Calu3 (cell line): ENCODE measurements at regions of chr1 and their contacts with region 1.

Region 1: GRCh38 chr1:61453111-61453961 is 271.6 kb downstream of the TM2D1 start:
- DNase-seq: peak; percentile 85
- H3K4me3 Mint-ChIP-seq: peak overlapping the region; percentile 24
- H3K27ac Mint-ChIP-seq: peak overlapping the region; percentile 94
- H3K4me1 Mint-ChIP-seq: peaks cover 44% of the 10 kb centered on the region
- H3K27me3 Mint-ChIP-seq: no peaks in the 10 kb centered on the region
- CTCF ChIP-seq: peak; percentile 83

Region 2: GRCh38 chr1:60969971-60970509 is 483.3 kb before region 1 on chr1:
- CTCF ChIA-PET with region 1: no interaction called
- intact Hi-C with region 1: loop called (anchors 2 kb)
- DNase-seq: no peak
- H3K4me3 Mint-ChIP-seq: no peak overlapping the region
- H3K27ac Mint-ChIP-seq: no peak overlapping the region
- H3K4me1 Mint-ChIP-seq: peaks cover 28% of the 10 kb centered on the region
- H3K27me3 Mint-ChIP-seq: peaks cover 11% of the 10 kb centered on the region
- CTCF ChIP-seq: no peak

Region 3: DNA sequence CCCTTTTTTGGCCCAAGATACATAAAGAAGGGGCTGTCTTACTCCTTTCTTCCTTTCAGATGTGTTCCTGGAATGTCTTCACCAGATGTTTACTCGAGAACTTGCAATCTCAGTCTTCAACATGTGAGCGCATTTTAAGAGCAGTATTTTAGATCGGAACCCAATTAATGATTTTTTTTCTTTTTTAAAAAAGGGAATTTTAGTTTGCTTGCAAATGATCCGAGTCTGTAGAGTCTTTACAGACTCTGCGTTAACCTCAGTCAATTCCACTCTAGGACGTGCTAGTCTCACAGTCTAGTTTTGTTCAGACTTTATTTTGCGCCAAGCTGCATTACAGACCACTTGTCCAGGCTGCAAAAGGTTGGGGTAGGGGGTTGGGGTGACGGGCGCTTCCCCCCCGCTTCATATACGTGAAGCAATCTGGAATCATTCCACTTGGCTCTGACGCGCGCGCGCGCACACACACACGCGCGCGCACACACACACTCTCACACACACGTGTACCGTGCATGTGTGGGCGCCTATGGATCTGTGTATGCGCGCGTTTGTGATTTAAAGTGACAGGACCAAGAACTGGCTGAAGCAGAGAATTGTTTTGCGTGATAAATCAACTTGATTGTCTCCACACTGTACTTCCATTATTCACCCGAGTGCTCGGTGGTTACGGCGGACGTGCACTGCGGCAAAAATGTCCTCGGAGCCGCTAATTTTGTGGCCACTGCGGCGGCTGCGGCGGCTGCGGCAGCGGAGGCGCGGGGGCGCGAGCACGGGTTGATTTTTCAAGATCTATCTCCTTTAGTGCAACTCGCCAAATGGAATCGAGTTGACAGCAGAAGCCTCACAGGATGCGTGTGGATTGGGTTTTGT is 396.5 kb before region 1 on chr1:
- CTCF ChIA-PET with region 1: no interaction called
- intact Hi-C with region 1: loop called (anchors 5 kb)
- DNase-seq: no peak
- H3K4me3 Mint-ChIP-seq: peak overlapping the region; percentile 95
- H3K27ac Mint-ChIP-seq: peak overlapping the region; percentile 86
- H3K4me1 Mint-ChIP-seq: peaks cover 29% of the 10 kb centered on the region
- H3K27me3 Mint-ChIP-seq: peaks cover 23% of the 10 kb centered on the region
- CTCF ChIP-seq: no peak

Region 4: GRCh38 chr1:61170328-61171238 is 282.8 kb before region 1 on chr1:
- CTCF ChIA-PET with region 1: no interaction called
- intact Hi-C with region 1: no loop called
- DNase-seq: peak; percentile 16
- H3K4me3 Mint-ChIP-seq: no peak overlapping the region
- H3K27ac Mint-ChIP-seq: no peak overlapping the region
- H3K4me1 Mint-ChIP-seq: peaks cover 28% of the 10 kb centered on the region
- H3K27me3 Mint-ChIP-seq: no peaks in the 10 kb centered on the region
- CTCF ChIP-seq: no peak

Region 5: GRCh38 chr1:61226784-61227567 is 226.4 kb before region 1 on chr1:
- CTCF ChIA-PET with region 1: no interaction called
- intact Hi-C with region 1: loop called (anchors 10 kb)
- DNase-seq: no peak
- H3K4me3 Mint-ChIP-seq: no peak overlapping the region
- H3K27ac Mint-ChIP-seq: no peak overlapping the region
- H3K4me1 Mint-ChIP-seq: peaks cover 26% of the 10 kb centered on the region
- H3K27me3 Mint-ChIP-seq: no peaks in the 10 kb centered on the region
- CTCF ChIP-seq: no peak

Region 6: DNA sequence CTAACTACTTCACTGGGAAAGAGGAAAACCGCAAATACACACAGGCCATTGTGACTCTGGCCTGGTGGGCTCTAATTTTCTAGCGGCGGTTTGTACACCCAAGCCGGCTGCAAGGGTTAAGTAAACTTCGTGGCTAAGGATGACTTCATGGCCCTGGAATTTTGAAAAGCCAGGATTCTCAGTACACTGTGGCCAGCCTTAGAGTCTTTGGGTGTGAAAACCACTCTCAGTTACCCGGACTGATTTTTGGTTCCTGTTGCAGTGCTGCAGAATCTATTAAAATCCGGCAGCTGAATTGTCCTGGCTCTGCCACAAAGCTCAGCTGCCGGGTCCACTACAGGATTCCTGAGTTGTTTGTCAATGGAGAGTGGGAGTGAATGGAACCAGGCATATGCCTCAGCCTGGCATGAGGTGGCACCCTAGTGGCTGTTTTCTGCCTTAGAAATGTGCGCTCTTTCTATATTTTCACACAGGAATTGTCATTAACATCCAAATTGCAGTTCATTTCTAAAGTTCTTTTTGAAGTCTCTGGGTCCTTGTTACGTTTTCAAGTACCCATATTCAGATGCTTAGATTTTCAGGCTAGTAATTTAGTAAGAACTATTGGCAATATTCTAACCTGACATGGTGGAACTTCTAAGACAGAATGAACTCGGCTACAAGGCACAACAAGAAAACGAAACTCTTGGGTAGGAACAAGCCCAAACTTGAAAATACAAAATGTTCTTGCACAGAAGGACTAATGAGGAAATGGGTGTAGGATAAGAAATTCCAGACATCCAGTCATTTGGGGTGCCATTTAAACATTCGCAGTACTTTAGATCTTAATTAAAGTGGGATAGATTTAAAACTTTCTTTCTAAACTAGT is 115.1 kb before region 1 on chr1:
- CTCF ChIA-PET with region 1: interaction called, 8 read pairs
- intact Hi-C with region 1: loop called (anchors 1 kb)
- DNase-seq: peak; percentile 80
- H3K4me3 Mint-ChIP-seq: peak overlapping the region; percentile 51
- H3K27ac Mint-ChIP-seq: peak overlapping the region; percentile 68
- H3K4me1 Mint-ChIP-seq: peaks cover 35% of the 10 kb centered on the region
- H3K27me3 Mint-ChIP-seq: no peaks in the 10 kb centered on the region
- CTCF ChIP-seq: peak; percentile 80

Region 7: GRCh38 chr1:61378494-61379180 is 74.7 kb before region 1 on chr1:
- CTCF ChIA-PET with region 1: no interaction called
- intact Hi-C with region 1: no loop called
- DNase-seq: no peak
- H3K4me3 Mint-ChIP-seq: no peak overlapping the region
- H3K27ac Mint-ChIP-seq: no peak overlapping the region
- H3K4me1 Mint-ChIP-seq: no peaks in the 10 kb centered on the region
- H3K27me3 Mint-ChIP-seq: no peaks in the 10 kb centered on the region
- CTCF ChIP-seq: no peak

Region 8: DNA sequence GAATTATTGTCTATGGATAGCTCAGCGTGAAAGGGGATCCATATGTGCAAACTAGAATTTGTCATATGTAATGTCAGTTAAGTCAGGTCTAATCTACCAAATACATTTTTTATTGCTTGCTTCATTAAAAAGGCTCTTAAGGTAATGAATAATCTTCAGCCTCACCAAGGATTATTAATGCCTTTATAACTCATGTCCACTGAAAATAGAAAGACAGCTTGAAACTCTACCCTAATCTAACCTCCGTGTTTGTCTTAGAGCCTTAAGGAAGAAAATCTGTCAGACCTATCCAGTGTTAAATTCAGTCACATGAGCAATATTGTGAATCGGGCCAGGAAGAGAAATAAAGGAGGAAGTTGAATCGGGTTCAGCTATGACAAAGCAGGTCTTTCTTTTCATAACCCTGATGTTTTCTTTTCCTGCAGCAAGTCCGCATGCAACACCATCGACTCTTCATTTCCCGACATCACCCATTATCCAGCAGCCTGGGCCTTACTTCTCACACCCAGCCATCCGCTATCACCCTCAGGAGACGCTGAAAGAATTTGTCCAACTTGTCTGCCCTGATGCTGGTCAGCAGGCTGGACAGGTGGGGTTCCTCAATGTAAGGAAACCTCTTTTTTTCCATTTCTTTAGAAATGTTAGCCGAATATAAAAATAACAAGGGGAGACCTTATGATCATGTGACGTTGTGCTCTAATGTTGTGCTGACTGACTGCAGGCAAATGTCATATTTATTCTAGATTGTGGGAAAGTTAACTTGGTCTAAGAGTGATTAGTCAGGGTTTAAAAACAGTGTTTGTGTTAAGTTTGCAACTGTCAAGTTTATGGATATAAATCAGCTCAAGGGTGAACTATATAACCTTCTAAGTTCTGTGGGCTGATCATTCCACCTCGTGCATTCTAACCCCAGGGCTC is 49.4 kb before region 1 on chr1:
- CTCF ChIA-PET with region 1: interaction called, 3 read pairs
- intact Hi-C with region 1: loop called (anchors 2 kb)
- DNase-seq: peak; percentile 19
- H3K4me3 Mint-ChIP-seq: peak overlapping the region; percentile 40
- H3K27ac Mint-ChIP-seq: peak overlapping the region; percentile 82
- H3K4me1 Mint-ChIP-seq: peaks cover 48% of the 10 kb centered on the region
- H3K27me3 Mint-ChIP-seq: no peaks in the 10 kb centered on the region
- CTCF ChIP-seq: no peak

Region 9: GRCh38 chr1:61491497-61491896 is 38.2 kb after region 1 on chr1:
- CTCF ChIA-PET with region 1: no interaction called
- intact Hi-C with region 1: no loop called
- DNase-seq: no peak
- H3K4me3 Mint-ChIP-seq: no peak overlapping the region
- H3K27ac Mint-ChIP-seq: no peak overlapping the region
- H3K4me1 Mint-ChIP-seq: no peaks in the 10 kb centered on the region
- H3K27me3 Mint-ChIP-seq: no peaks in the 10 kb centered on the region
- CTCF ChIP-seq: no peak

Region 10: DNA sequence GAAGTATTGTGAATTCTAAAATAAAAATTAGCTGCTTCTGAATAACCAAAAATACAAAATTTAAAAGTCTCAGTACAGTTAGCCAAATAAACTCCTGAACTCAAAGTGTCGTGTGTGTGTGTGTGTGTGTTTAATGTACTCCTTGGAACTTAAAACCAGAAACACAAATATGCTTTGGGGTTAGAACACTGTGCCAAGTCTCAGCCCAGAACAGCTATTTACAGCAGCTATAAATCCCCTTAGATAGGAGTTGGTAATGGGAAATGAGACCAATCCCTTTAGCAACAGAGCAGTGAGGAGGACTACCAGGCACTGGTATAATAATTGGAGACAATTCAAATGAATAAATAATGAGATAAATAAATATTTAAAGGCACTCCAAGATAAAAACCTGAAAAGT is 372.1 kb after region 1 on chr1:
- CTCF ChIA-PET with region 1: no interaction called
- intact Hi-C with region 1: no loop called
- DNase-seq: no peak
- H3K4me3 Mint-ChIP-seq: no peak overlapping the region
- H3K27ac Mint-ChIP-seq: no peak overlapping the region
- H3K4me1 Mint-ChIP-seq: no peaks in the 10 kb centered on the region
- H3K27me3 Mint-ChIP-seq: no peaks in the 10 kb centered on the region
- CTCF ChIP-seq: no peak